ENCODE measurements at regions of chr3 and their contacts with region 1.

Region 1: DNA sequence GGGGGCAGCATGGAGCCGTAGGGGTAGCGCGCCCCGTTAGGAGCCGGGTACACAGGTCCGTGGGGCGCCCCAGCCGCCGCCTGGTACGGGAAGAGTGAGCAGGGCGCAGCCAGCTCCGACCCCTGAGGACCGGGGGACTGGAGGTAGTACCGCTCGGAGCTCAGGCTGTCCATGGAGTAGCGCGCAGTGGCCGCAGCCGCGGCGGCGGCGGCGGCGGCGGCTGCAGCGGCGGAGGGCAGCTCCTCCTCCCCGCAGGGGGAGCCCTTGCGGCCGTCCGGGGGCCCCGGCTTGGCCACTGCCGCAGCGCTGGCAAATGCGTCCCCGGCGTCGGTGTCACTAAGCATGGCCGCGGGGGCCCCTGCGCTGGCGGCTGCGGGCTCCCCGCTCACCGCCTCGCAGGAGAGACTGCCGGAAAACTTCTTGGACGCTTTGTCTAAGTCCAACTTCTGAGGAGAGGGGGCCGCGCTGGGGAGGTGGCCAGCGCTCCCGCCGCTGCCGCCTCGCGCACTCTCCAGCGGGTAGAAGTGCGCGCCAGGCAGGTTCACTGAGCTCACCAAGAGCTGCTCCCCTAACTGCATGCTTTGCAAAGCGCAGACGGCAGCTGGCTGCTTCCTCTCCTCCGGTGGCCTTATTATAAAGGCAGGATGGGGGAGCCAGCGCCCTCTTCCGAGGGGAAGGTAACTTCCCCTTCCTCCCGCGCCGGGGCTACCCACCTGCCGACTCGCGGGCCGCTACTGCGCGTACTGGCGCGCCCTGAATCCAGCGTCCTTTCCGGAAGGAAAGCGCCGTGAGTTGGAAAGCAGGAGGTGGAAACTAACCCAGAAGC is at the start of gene EOMES:
- DNase-seq: peak; percentile 84
- ATAC-seq: peak; percentile 79
- H3K4me3 Mint-ChIP-seq: peak within 1 kb of the TSS; percentile 84
- H3K27ac Mint-ChIP-seq: peak within 1 kb of the TSS; percentile 70
- H3K4me1 Mint-ChIP-seq: peaks cover 30% of the 10 kb centered on the region
- H3K27me3 Mint-ChIP-seq: peaks cover 74% of the 10 kb centered on the region
- total RNA-seq, gene EOMES: 2.9 to 3.3 TPM

Region 2: GRCh38 chr3:27905625-27906024 is 183.7 kb after region 1 on chr3:
- CTCF ChIA-PET with region 1: interaction called, 11 read pairs
- POLR2A ChIA-PET with region 1: interaction called, 3 read pairs
- DNase-seq: peak; percentile 59
- ATAC-seq: peak; percentile 84
- H3K4me3 Mint-ChIP-seq: no peak overlapping the region
- H3K27ac Mint-ChIP-seq: no peak overlapping the region
- H3K4me1 Mint-ChIP-seq: peaks cover 44% of the 10 kb centered on the region
- H3K27me3 Mint-ChIP-seq: no peaks in the 10 kb centered on the region

Region 3: GRCh38 chr3:28286595-28286994 is 564.7 kb after region 1 on chr3:
- CTCF ChIA-PET with region 1: interaction called, 20 read pairs
- POLR2A ChIA-PET with region 1: no interaction called
- DNase-seq: no peak
- ATAC-seq: peak; percentile 60
- H3K4me3 Mint-ChIP-seq: no peak overlapping the region
- H3K27ac Mint-ChIP-seq: no peak overlapping the region
- H3K4me1 Mint-ChIP-seq: peaks cover 3% of the 10 kb centered on the region
- H3K27me3 Mint-ChIP-seq: no peaks in the 10 kb centered on the region

Region 4: DNA sequence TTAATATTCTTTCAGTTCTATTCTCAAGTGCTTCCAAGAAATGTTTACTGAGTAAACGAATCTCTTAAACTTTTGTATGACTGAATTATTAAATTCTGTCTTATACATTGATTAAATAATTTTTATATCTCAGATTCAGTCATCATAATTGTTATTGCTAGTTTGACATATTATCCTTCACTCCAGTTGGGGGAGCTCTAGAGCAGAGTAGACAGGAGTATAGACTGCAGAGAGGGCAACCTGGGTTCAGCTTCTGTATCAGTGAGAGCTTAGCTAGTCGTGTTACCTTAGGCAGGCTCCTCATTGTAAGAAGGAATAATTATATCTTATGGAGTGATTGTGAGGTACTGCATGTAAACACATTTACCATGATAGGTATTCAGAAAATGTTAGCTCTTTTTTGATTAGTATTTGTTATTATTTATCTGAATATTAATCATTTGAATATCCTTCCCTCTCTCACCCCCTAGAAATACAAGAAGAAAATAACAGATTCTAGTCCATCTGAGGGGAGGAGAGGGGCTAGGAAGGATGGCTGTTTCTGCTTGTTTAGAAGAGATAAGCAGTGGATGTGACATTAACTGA is 595.6 kb after region 1 on chr3:
- CTCF ChIA-PET with region 1: interaction called, 27 read pairs
- POLR2A ChIA-PET with region 1: no interaction called
- DNase-seq: peak; percentile 62
- ATAC-seq: peak; percentile 87
- H3K4me3 Mint-ChIP-seq: no peak overlapping the region
- H3K27ac Mint-ChIP-seq: no peak overlapping the region
- H3K4me1 Mint-ChIP-seq: peaks cover 14% of the 10 kb centered on the region
- H3K27me3 Mint-ChIP-seq: no peaks in the 10 kb centered on the region

Region 5: GRCh38 chr3:28328188-28329151 is 606.5 kb after region 1 on chr3:
- CTCF ChIA-PET with region 1: interaction called, 63 read pairs
- POLR2A ChIA-PET with region 1: interaction called, 3 read pairs
- DNase-seq: no peak
- ATAC-seq: no peak
- H3K4me3 Mint-ChIP-seq: no peak overlapping the region
- H3K27ac Mint-ChIP-seq: no peak overlapping the region
- H3K4me1 Mint-ChIP-seq: peaks cover 33% of the 10 kb centered on the region
- H3K27me3 Mint-ChIP-seq: no peaks in the 10 kb centered on the region

Region 6: DNA sequence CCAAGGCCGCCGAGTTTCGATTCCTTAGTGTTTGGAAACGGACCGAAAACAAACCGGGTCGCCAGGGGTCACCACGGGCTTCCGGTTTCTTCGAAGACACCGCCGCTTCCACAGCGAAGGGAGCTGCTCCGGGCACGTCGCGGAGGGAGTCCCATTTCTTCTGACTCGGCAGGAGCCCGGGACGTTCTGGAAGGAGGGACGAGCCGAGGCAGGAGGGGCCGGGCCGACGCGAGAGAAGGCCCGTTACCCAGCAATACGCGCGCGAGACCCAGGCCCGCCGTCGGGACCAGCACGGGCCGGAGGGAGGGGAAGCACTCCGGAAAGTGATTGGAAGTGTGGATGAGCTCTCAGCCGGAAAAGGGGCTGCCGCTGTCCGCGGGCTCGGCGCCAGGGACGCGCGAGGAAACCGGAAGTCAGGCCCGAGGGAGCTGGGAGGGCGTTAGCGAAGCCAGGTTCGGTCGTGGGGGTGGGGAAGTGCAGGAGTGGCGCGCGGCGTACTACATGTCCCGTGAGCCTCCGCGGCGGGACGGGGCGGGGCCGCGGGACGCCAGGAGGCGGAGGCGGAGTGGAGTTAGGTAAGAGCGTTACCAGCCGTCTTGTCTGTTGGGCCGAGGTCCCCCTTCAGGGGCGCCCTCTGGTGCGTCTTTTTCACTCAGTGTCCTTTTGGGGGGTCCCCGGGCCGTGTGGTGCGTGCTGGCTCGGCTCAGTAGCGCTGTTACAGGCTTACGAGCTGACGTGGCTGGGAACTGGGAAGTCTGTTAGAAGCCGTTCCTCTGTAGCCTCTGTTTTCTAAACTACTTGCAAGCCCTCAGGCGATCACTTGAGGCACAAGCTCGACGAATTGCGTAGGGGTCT is 626.9 kb after region 1 on chr3 and contains the starts of genes AZI2 and ZCWPW2:
- CTCF ChIA-PET with region 1: interaction called, 3 read pairs
- POLR2A ChIA-PET with region 1: interaction called, 12 read pairs
- DNase-seq: peak; percentile 95
- ATAC-seq: peak; percentile 87
- H3K4me3 Mint-ChIP-seq: peak within 1 kb of the TSS; percentile 97
- H3K27ac Mint-ChIP-seq: peak within 1 kb of the TSS; percentile 97
- H3K4me1 Mint-ChIP-seq: peaks cover 43% of the 10 kb centered on the region
- H3K27me3 Mint-ChIP-seq: no peaks in the 10 kb centered on the region
- total RNA-seq, gene AZI2: 52.0 to 55.3 TPM
- total RNA-seq, gene ZCWPW2: 0.31 to 0.42 TPM

Measured in activated CD8-positive, alpha-beta T cell treated with anti-CD3 and anti-CD28 coated beads, Interleukin-2, amount 10 ng/mL, durations not matched to agents 7 days and 5 days (primary cell).